ENCODE measurements at regions of chr20 and their contacts with region 1.

Region 1: DNA sequence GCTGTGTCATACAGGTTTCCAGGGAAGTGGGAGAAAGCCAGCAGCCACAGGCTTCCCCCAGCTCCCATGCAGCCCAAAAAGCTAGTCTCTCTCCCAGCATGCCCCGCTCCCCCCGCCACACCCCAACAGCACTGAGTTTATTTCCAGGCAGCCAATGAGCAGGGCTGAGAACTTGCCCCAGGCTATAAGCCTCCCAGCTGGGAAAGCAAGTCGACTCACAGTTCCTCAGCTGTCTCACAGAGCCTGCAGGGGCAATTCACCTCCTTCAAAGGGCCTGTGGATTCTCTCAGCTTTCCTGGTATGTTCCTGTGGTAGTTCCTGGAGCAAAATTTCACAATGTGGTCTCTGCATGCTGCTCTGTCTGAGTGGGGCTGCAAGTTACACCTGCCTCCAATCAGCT is 34.2 kb downstream of the PAX1 start:
- DNase-seq: no peak
- H3K4me3 ChIP-seq: no peak overlapping the region
- H3K27ac ChIP-seq: no peak overlapping the region
- H3K4me1 ChIP-seq: no peaks in the 10 kb centered on the region
- H3K27me3 ChIP-seq: no peaks in the 10 kb centered on the region
- CTCF ChIP-seq: no peak
- POLR2A ChIP-seq: no peak

Region 2: DNA sequence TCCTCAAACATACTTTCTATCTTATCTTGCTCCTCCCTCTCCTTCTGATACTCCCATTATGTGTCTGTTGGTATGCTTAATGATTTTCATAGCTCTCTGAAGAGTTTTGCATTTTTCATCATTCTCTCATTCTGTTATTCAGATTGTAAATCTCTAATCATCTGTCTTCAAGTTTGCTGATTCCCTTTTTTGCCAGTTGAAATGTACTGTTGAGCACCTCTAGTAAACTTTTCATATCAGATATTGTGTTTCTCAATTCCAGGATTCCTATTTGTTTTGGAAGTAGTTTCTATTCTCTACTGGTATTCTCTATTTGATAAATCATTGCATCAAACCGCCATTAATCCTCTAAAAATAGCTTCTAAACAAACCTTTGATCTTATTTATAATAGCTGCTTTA is 353.4 kb after region 1 on chr20:
- intact Hi-C with region 1: loop called (anchors 5 kb)
- DNase-seq: no peak
- H3K4me3 ChIP-seq: no peak overlapping the region
- H3K27ac ChIP-seq: no peak overlapping the region
- H3K4me1 ChIP-seq: no peaks in the 10 kb centered on the region
- H3K27me3 ChIP-seq: no peaks in the 10 kb centered on the region
- CTCF ChIP-seq: no peak
- POLR2A ChIP-seq: no peak